Right cardiac atrium (tissue), 5 donors: ENCODE measurements at regions of chr9 and their contacts with region 1.

Region 1: DNA sequence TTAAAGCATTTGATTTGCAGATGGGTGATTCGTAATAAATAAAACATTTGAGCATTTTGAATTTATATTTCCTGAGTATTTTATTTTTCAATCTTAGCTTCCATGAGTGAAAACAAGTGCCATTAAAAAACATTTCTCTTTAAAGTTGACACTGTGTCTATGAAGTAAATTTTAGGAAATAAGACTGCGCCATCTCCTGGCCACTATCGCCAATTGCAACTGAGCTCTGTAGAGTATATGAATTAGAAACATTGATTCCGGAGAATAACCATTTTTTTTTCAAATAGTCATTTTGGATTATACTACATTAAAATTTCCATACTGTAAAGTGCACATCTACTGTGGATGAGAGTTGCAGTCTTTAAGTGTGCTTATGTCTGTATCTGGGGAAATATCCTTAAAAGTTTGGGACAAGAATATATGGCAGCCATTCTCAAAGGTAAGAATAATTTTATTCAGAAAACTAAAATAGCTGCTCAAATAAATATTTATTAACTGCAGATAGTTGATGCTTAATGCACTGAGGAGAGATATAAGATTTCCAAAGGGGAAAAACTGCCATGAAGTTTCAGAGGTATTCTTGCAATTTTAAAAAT is 5.9 kb downstream of the DMRTA1 start:
- DNase-seq: peak; percentile 35 to 74 (median 54)
- ATAC-seq: no peak
- H3K4me3 ChIP-seq: no peak overlapping the region
- H3K27ac ChIP-seq: no peak overlapping the region
- H3K4me1 ChIP-seq: no peaks in the 10 kb centered on the region
- H3K27me3 ChIP-seq: no peaks in the 10 kb centered on the region

Region 2: DNA sequence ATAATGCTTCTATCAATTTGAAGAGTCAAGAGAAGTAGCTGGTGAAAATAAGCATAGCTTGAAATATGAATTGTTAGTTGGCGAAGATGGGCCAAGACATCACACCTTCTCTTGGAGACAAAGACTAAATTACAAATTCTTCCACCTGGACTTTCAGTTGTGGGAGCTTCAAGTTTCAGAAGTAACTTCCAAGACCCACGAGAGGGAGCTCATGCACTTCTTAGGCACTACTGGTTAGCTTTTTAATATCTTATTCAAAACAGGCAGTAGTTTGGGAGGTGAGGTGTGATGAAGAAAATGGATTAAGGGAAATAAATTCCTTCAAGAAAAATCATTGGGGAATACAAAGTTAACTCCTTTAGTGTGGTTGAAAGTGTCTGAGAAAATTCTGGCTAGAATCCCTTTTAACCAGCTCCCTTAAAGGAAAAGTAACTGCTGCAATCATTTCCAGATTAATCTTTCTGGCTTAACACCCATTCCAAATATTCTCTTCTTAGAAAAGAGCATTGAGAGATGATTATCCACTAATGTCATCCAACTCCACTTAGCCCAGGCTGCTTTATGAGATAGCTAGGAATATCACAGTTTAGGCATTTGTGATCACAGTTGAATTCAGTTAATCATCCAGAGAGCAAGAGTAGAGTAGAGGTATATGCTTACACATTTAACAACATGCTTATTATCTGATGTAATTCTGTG is 145.4 kb before region 1 on chr9:
- intact Hi-C with region 1: loop called in 3 of 4 experiments (anchors 5 to 10 kb)
- DNase-seq: no peak
- ATAC-seq: no peak
- H3K4me3 ChIP-seq: no peak overlapping the region
- H3K27ac ChIP-seq: no peak overlapping the region
- H3K4me1 ChIP-seq: no peaks in the 10 kb centered on the region
- H3K27me3 ChIP-seq: no peaks in the 10 kb centered on the region

Region 3: GRCh38 chr9:23746317-23746716 is 1293.8 kb after region 1 on chr9:
- intact Hi-C with region 1: no loop called
- DNase-seq: no peak
- ATAC-seq: no peak
- H3K4me3 ChIP-seq: no peak overlapping the region
- H3K27ac ChIP-seq: no peak overlapping the region
- H3K4me1 ChIP-seq: no peaks in the 10 kb centered on the region
- H3K27me3 ChIP-seq: no peaks in the 10 kb centered on the region